Testis (tissue), 5 donors: ENCODE measurements at regions of chr5 and their contacts with region 1.

Region 1: GRCh38 chr5:35926389-35927051 is 11.9 kb downstream of the CAPSL start:
- DNase-seq: peak; percentile 81
- H3K4me3 ChIP-seq: peak overlapping the region in 1 of 2 donors; percentile 37
- H3K27ac ChIP-seq: no peak overlapping the region
- H3K4me1 ChIP-seq: peaks cover 6% of the 10 kb centered on the region
- H3K27me3 ChIP-seq: no peaks in the 10 kb centered on the region
- CTCF ChIP-seq: peak; percentile 89 to 93 (median 91)
- POLR2A ChIP-seq: no peak

Region 2: GRCh38 chr5:35617435-35618303 is 308.9 kb before region 1 on chr5 and contains the start of gene SPEF2:
- intact Hi-C with region 1: loop called (anchors 10 kb)
- DNase-seq: peak; percentile 92
- H3K4me3 ChIP-seq: peak within 1 kb of the TSS; percentile 59 to 90
- H3K27ac ChIP-seq: peak within 1 kb of the TSS in 1 of 2 donors; percentile 39
- H3K4me1 ChIP-seq: no peaks in the 10 kb centered on the region
- H3K27me3 ChIP-seq: no peaks in the 10 kb centered on the region
- CTCF ChIP-seq: peak; percentile 63 to 71 (median 64)
- POLR2A ChIP-seq: no peak
- total RNA-seq, gene SPEF2: 17.8 to 22.7 TPM

Region 3: DNA sequence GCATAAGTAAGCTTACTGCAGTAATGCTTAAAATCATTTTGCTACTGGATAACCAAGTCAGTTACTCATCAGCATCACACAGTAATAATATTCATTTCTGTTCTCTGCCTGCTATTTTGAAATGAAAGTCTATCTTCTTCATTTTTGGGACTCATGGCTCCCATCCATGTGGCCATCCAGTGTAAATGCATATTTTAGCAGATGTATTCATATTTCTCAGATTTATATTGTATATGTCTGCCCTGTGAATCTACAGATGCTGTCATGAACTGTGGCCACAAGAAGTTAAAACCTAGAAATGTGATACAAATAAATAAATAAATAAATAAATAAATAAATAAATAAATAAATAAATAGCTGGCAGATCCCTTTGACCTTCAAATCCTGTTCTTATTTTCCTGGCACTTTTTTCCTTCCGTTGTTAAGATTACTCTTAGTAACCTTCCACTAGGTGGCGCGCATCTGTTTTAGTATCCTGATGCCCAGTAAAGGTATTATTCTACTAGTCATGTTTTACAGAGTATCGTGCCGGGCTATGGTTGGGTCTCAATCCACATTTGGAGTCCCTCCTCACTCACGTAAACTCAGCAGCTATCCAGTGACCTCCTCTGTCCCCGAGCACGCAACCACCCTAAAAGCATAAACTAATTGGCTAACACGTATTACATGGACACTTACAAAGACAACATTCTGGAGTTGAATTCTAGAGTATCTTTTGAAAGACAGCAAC is 149.0 kb before region 1 on chr5:
- intact Hi-C with region 1: loop called (anchors 5 kb)
- DNase-seq: peak; percentile 94
- H3K4me3 ChIP-seq: no peak overlapping the region
- H3K27ac ChIP-seq: no peak overlapping the region
- H3K4me1 ChIP-seq: no peaks in the 10 kb centered on the region
- H3K27me3 ChIP-seq: no peaks in the 10 kb centered on the region
- CTCF ChIP-seq: peak; percentile 40 to 69 (median 51)
- POLR2A ChIP-seq: no peak

Region 4: GRCh38 chr5:35830587-35830986 is 95.9 kb before region 1 on chr5:
- intact Hi-C with region 1: no loop called
- DNase-seq: no peak
- H3K4me3 ChIP-seq: no peak overlapping the region
- H3K27ac ChIP-seq: no peak overlapping the region
- H3K4me1 ChIP-seq: no peaks in the 10 kb centered on the region
- H3K27me3 ChIP-seq: no peaks in the 10 kb centered on the region
- CTCF ChIP-seq: no peak
- POLR2A ChIP-seq: no peak